ENCODE measurements at regions of chr6 and their contacts with region 1.

Region 1: GRCh38 chr6:170295510-170296422 is 4.9 kb upstream of the DLL1 start:
- DNase-seq: peak in 1 of 2 experiments; percentile 53
- H3K4me3 ChIP-seq: peak overlapping the region; percentile 64
- H3K4me3 Mint-ChIP-seq: peak overlapping the region; percentile 78
- H3K27ac Mint-ChIP-seq: no peak overlapping the region
- H3K4me1 ChIP-seq: peaks cover 18% of the 10 kb centered on the region
- H3K4me1 Mint-ChIP-seq: peaks cover 11% of the 10 kb centered on the region
- H3K27me3 ChIP-seq: peaks cover 7% of the 10 kb centered on the region
- H3K27me3 Mint-ChIP-seq: peaks cover 30% of the 10 kb centered on the region
- CTCF ChIP-seq: no peak

Region 2: DNA sequence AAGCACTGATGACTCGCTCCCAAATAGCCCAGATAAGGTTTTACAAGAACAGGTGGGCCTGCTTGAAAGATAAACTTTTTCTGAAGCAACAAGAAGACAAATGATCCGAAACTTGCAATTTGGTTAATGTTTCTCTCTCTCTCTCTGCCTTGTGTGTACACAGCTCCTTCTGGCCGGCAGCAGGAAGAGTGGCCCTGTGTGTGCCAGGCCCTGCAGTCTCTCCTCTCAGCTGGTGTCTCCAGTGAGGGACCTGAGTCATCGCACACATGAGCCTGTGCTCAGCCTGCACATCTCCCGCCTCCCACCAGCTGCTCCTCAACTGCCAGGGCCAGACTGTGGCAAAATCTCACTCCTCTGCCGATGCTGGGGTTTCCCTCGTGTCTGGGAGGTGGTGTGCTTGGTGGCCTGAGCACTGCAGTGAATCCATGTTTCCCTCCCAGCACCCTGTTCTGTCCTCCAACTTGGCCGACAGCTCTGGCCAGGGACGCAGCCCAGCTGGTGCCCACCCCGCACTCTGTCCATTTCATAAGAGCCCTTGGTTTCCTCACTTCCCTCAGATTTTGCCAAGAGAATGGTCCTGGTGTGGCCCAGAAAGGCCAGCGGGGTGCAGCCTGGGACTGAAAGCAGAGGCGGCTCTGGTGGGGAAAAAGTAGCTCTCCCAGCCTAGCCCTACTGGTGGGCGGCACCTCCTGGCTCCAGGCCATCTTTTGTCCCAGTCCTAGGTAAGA is 494.9 kb before region 1 on chr6:
- CTCF ChIA-PET with region 1: interaction called, 4 read pairs
- POLR2A ChIA-PET with region 1: interaction called, 10 read pairs
- intact Hi-C with region 1: no loop called
- DNase-seq: peak; percentile 92 to 97
- H3K4me3 ChIP-seq: no peak overlapping the region
- H3K4me3 Mint-ChIP-seq: peak overlapping the region; percentile 75
- H3K27ac Mint-ChIP-seq: peak overlapping the region; percentile 93
- H3K4me1 ChIP-seq: peaks cover 81% of the 10 kb centered on the region
- H3K4me1 Mint-ChIP-seq: peaks cover 49% of the 10 kb centered on the region
- H3K27me3 ChIP-seq: no peaks in the 10 kb centered on the region
- H3K27me3 Mint-ChIP-seq: no peaks in the 10 kb centered on the region
- CTCF ChIP-seq: no peak

Region 3: DNA sequence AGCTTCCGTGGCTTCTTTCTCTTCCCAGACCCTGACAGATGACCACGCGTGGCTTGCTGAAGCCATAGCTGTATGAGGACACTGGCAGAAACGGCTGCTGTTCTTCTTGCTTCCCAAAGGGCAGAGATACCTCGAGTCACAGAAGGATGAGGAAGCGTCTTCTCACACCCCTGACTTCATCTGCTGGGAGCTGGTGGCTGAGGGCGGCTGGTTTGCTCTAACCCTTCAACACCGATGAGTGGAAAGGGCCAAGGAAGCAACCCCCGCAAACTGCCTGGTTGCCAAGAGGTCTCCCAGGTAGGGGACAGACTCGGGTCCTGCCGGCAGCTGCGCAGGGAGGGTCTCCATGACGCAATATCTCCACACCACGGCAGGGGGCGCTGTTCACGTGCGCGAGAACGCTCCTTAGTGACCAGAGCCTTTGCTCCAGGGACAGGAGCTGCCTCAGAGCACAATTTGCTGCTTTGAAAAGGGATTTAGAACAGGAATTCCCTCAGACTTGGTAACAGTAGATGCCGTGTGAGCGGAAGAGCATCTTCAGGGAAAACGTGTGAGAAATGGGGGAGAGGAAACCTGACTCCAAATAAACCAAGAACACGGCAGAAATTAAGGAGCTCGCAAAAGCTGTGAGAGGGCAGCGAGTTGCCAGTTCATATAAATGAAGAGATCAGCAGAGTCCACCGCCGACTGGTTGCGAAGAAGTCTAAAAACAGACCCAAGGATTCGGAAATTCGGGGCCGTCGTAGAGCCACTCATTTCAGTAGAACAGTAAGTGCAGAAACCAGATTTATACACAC is 464.1 kb before region 1 on chr6:
- CTCF ChIA-PET with region 1: interaction called, 16 read pairs
- POLR2A ChIA-PET with region 1: interaction called, 11 read pairs
- intact Hi-C with region 1: loop called (anchors 1 kb)
- DNase-seq: peak; percentile 70 to 82
- H3K4me3 ChIP-seq: no peak overlapping the region
- H3K4me3 Mint-ChIP-seq: peak overlapping the region; percentile 27
- H3K27ac Mint-ChIP-seq: peak overlapping the region; percentile 48
- H3K4me1 ChIP-seq: peaks cover 35% of the 10 kb centered on the region
- H3K4me1 Mint-ChIP-seq: peaks cover 41% of the 10 kb centered on the region
- H3K27me3 ChIP-seq: no peaks in the 10 kb centered on the region
- H3K27me3 Mint-ChIP-seq: no peaks in the 10 kb centered on the region
- CTCF ChIP-seq: peak; percentile 74 to 83

Region 4: DNA sequence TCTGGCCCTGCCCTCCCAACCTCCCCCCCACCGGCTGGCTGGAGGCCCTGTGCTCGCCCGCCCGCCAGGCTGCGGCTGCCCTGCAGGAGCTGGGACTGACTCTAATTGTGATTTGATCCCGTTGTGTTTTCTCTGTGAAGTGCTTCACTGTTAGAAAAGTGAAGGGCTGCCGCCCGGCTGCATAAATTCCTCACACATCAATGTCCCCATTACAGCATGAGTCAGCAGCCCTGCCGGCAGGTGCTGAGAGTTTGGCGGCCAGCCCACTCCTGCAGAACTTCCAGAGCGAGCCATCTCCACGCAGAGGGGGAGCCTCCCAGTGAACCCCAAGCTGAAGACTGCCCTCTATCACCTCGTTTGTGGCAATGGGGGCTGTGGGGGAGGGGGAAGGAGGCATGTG is 142.8 kb before region 1 on chr6:
- CTCF ChIA-PET with region 1: no interaction called
- POLR2A ChIA-PET with region 1: no interaction called
- intact Hi-C with region 1: loop called (anchors 10 kb)
- DNase-seq: peak in 1 of 2 experiments; percentile 28
- H3K4me3 ChIP-seq: no peak overlapping the region
- H3K4me3 Mint-ChIP-seq: no peak overlapping the region
- H3K27ac Mint-ChIP-seq: no peak overlapping the region
- H3K4me1 ChIP-seq: peaks cover 5% of the 10 kb centered on the region; the same call in 1 of the 2 replicates
- H3K4me1 Mint-ChIP-seq: no peaks in the 10 kb centered on the region
- H3K27me3 ChIP-seq: no peaks in the 10 kb centered on the region
- H3K27me3 Mint-ChIP-seq: no peaks in the 10 kb centered on the region
- CTCF ChIP-seq: no peak

Region 5: GRCh38 chr6:170243791-170244291 is 51.9 kb before region 1 on chr6:
- CTCF ChIA-PET with region 1: no interaction called
- POLR2A ChIA-PET with region 1: no interaction called
- intact Hi-C with region 1: no loop called
- DNase-seq: peak in 1 of 2 experiments; percentile 12
- H3K4me3 ChIP-seq: no peak overlapping the region
- H3K4me3 Mint-ChIP-seq: no peak overlapping the region
- H3K27ac Mint-ChIP-seq: no peak overlapping the region
- H3K4me1 ChIP-seq: no peaks in the 10 kb centered on the region
- H3K4me1 Mint-ChIP-seq: no peaks in the 10 kb centered on the region
- H3K27me3 ChIP-seq: no peaks in the 10 kb centered on the region
- H3K27me3 Mint-ChIP-seq: no peaks in the 10 kb centered on the region
- CTCF ChIP-seq: no peak